WTC11 (cell line): ENCODE measurements at regions of chr11 and their contacts with region 1.

Region 1: GRCh38 chr11:35822815-35823495 is 120.9 kb upstream of the LDLRAD3 start:
- DNase-seq: no peak
- ATAC-seq: no peak
- H3K4me3 Mint-ChIP-seq: no peak overlapping the region
- H3K27ac Mint-ChIP-seq: no peak overlapping the region
- H3K4me1 Mint-ChIP-seq: peaks cover 15% of the 10 kb centered on the region
- H3K27me3 Mint-ChIP-seq: peaks cover 8% of the 10 kb centered on the region; the same call in 1 of the 2 replicates
- CTCF ChIP-seq: no peak

Region 2: DNA sequence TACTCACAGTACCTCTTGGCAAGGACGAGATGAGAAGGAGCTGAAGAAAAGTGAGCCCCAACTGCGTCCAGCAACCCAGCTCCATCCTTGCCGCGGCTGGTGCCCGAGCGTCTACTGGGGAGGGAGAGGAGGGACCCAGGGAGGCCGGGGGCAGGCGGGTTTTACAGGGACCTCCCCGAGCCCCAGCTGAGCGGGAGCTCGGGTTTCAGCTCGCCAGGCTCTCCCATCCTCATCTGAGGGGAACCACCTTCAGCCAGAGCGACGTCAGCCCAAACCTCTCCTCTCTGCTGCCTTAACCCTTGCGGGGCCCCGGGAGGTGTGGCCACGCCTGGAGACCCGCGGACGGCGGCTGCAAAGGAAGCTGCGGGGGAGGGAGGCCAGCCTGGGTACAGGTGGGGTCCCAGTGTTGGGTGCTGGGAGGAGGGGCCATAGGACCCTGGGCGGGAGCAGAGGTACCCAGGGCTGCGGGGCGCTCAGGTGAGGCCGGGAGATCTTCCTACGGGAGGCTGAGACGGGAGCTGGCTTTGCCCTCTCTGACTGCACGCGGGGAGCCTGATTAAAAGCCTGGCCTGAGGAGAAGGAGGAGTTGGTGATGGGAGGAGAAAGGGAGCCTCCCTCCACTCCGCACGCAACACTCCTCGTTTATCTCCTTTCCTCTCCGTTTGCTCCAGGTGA is 297.3 kb before region 1 on chr11 and contains the start of gene PAMR1:
- CTCF ChIA-PET with region 1: interaction called, 28 read pairs
- POLR2A ChIA-PET with region 1: no interaction called
- DNase-seq: peak; percentile 72
- ATAC-seq: peak; percentile 81
- H3K4me3 Mint-ChIP-seq: peak within 1 kb of the TSS; percentile 84
- H3K27ac Mint-ChIP-seq: no peak within 1 kb of the TSS
- H3K4me1 Mint-ChIP-seq: peaks cover 26% of the 10 kb centered on the region
- H3K27me3 Mint-ChIP-seq: peaks cover 71% of the 10 kb centered on the region
- CTCF ChIP-seq: no peak
- total RNA-seq, gene PAMR1: 2.3 to 3.2 TPM (median 2.8 TPM) in 3 replicates

Region 3: GRCh38 chr11:35780951-35781860 is 41.7 kb before region 1 on chr11:
- CTCF ChIA-PET with region 1: interaction called, 26 read pairs
- POLR2A ChIA-PET with region 1: no interaction called
- DNase-seq: no peak
- ATAC-seq: no peak
- H3K4me3 Mint-ChIP-seq: no peak overlapping the region
- H3K27ac Mint-ChIP-seq: no peak overlapping the region
- H3K4me1 Mint-ChIP-seq: peaks cover 7% of the 10 kb centered on the region
- H3K27me3 Mint-ChIP-seq: no peaks in the 10 kb centered on the region
- CTCF ChIP-seq: no peak

Region 4: GRCh38 chr11:35893796-35894475 is 71.0 kb after region 1 on chr11:
- CTCF ChIA-PET with region 1: interaction called, 12 read pairs
- POLR2A ChIA-PET with region 1: interaction called, 4 read pairs
- DNase-seq: peak; percentile 11
- ATAC-seq: no peak
- H3K4me3 Mint-ChIP-seq: no peak overlapping the region
- H3K27ac Mint-ChIP-seq: no peak overlapping the region
- H3K4me1 Mint-ChIP-seq: peaks cover 14% of the 10 kb centered on the region
- H3K27me3 Mint-ChIP-seq: peaks cover 4% of the 10 kb centered on the region; the same call in 1 of the 2 replicates
- CTCF ChIP-seq: no peak

Region 5: GRCh38 chr11:36002196-36002595 is 179.2 kb after region 1 on chr11:
- CTCF ChIA-PET with region 1: interaction called, 25 read pairs
- POLR2A ChIA-PET with region 1: no interaction called
- DNase-seq: no peak
- ATAC-seq: peak; percentile 75
- H3K4me3 Mint-ChIP-seq: no peak overlapping the region
- H3K27ac Mint-ChIP-seq: peak overlapping the region; percentile 42
- H3K4me1 Mint-ChIP-seq: peaks cover 51% of the 10 kb centered on the region
- H3K27me3 Mint-ChIP-seq: no peaks in the 10 kb centered on the region
- CTCF ChIP-seq: no peak

Region 6: DNA sequence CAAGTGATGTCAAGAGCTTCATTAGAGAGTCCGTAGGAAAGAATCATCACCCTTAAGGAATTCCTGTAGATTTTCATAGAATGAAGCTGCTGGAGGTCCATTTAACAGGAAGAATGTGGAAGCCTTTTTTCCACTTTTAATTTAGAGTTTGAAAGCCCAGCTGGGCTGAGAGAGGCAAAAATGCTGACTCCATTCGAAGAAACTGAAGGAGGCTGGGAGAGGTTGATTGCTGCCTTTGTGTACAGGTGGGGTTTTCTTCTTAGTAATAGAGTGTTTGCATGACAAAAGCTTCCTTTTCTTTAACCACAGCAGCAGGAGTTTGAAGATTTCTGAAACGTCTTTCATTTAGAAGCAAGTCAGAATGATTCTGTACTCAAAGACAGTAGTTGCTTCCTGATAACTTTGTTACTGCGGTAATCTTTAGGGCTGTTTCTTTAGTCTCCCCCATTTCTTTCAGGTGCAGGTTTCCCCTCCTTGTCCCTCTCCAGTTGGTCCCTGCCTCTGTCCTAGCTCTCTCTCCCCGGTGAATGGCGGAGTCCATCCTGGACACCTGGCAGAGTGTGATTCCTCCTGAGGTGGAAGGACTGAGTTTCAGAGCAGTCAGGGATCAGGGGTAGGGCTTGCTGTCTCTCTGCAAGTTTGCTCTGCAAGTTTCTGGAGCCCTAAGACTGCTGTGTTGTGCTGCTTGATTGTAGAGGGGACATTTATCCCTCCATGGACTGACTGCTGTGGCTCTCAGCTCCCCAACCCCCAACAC is 287.1 kb after region 1 on chr11:
- CTCF ChIA-PET with region 1: interaction called, 32 read pairs
- POLR2A ChIA-PET with region 1: interaction called, 4 read pairs
- DNase-seq: peak; percentile 47
- ATAC-seq: peak; percentile 77
- H3K4me3 Mint-ChIP-seq: peak overlapping the region; percentile 40
- H3K27ac Mint-ChIP-seq: peak overlapping the region; percentile 99
- H3K4me1 Mint-ChIP-seq: peaks cover 60% of the 10 kb centered on the region
- H3K27me3 Mint-ChIP-seq: no peaks in the 10 kb centered on the region; the same call in 1 of the 2 replicates
- CTCF ChIP-seq: no peak

Region 7: GRCh38 chr11:36249246-36249645 is 426.3 kb after region 1 on chr11:
- CTCF ChIA-PET with region 1: interaction called, 18 read pairs
- POLR2A ChIA-PET with region 1: no interaction called
- DNase-seq: no peak
- ATAC-seq: no peak
- H3K4me3 Mint-ChIP-seq: no peak overlapping the region
- H3K27ac Mint-ChIP-seq: no peak overlapping the region
- H3K4me1 Mint-ChIP-seq: no peaks in the 10 kb centered on the region
- H3K27me3 Mint-ChIP-seq: peaks cover 3% of the 10 kb centered on the region; the same call in 1 of the 2 replicates
- CTCF ChIP-seq: no peak